ENCODE measurements at regions of chr1 and their contacts with region 1.

Region 1: DNA sequence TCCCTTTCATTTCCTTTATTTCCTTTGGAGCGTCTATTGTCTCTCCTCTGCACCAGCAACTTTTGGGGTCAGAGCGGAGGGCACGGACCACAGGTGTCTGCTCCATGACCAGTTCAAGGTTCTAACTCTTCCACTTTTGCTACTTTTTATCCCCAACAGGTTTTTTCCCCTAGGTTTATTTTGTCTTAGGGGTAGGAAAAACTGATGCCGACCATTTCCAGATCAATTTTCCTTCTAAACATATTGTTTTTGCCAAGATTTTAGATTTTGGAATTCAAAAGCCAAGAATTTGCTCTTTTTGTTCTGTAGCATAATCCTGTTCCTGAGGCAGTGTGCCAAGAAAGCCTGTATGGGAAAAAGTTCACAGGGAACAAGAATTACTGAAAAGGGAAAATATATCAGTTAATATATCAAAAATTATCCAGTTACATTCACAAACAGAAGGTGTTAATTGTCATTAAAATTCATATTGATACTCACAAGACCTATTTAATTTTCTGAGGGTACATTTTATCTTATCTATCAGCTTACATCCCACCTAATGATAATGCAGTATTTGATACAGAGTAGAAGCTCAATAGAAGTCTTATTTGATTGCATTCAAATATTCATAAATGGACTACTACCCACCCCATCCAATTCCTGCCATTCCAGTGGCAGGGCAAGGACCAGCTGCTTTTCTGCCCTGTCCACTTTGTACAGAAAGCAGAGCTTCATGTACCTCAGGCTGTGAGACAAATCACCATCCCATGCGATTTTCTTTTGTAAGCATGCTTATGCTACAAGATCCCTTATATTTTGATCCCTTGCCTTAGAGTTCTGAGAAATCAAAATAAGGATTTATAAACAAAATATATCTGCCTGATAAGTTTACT is 31.2 kb downstream of the TSEN15 start:
- DNase-seq: no peak
- H3K4me3 ChIP-seq: no peak overlapping the region
- H3K27ac ChIP-seq: no peak overlapping the region
- H3K4me1 ChIP-seq: peaks cover 0 to 16% (median 2%) of the 10 kb centered on the region in 4 donors
- H3K27me3 ChIP-seq: no peaks in the 10 kb centered on the region
- CTCF ChIP-seq: no peak

Region 2: GRCh38 chr1:184222652-184223052 is 139.9 kb after region 1 on chr1:
- intact Hi-C with region 1: loop called (anchors 10 kb)
- DNase-seq: peak; percentile 45 to 70
- H3K4me3 ChIP-seq: no peak overlapping the region
- H3K27ac ChIP-seq: no peak overlapping the region
- H3K4me1 ChIP-seq: peaks cover 0 to 8% (median 0%) of the 10 kb centered on the region in 4 donors
- H3K27me3 ChIP-seq: no peaks in the 10 kb centered on the region
- CTCF ChIP-seq: peak; percentile 84 to 92